Left colon (tissue), 2 donors: ENCODE measurements at regions of chr16 and their contacts with region 1.

Region 1: GRCh38 chr16:66977341-66978113 is 10.9 kb upstream of the CES4A start:
- DNase-seq: peak; percentile 84 to 95
- ATAC-seq: peak; percentile 87

Region 2: GRCh38 chr16:67159593-67160406 is 182.3 kb after region 1 on chr16 and contains the starts of genes FBXL8 and TRADD:
- intact Hi-C with region 1: loop called (anchors 5 to 10 kb)
- DNase-seq: peak; percentile 80 to 86
- ATAC-seq: peak; percentile 74
- total RNA-seq, gene FBXL8: 20.2 to 23.0 TPM
- total RNA-seq, gene TRADD: 25.5 to 27.4 TPM

Region 3: DNA sequence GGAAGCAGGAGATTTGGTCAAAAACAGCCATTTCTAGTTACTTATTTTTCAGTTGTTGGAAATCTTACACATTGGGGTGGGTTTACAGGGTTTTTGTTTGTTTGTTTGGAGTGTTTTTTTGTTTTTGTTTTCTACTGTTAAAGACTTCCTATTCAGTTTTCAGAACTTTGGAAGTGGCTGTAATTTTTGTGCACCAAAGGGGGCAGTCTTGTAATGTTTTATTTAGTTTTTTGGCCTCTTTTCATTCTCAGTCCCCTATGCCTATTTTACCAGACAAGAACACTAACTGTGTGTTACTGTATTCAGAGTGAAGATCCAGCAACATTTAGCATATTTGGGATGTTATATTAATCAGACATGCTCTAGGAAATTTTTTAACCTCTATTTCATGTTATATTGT is 395.1 kb after region 1 on chr16:
- intact Hi-C with region 1: no loop called
- DNase-seq: no peak
- ATAC-seq: no peak